Panc1 (cell line): ENCODE measurements at regions of chr2 and their contacts with region 1.

Region 1: GRCh38 chr2:106316915-106317314 is 122.8 kb upstream of the UXS1 start:
- DNase-seq: no peak
- ATAC-seq: no peak
- H3K4me3 ChIP-seq: no peak overlapping the region
- H3K27ac ChIP-seq: no peak overlapping the region
- H3K4me1 ChIP-seq: no peaks in the 10 kb centered on the region
- H3K27me3 ChIP-seq: no peaks in the 10 kb centered on the region
- CTCF ChIP-seq: no peak

Region 2: DNA sequence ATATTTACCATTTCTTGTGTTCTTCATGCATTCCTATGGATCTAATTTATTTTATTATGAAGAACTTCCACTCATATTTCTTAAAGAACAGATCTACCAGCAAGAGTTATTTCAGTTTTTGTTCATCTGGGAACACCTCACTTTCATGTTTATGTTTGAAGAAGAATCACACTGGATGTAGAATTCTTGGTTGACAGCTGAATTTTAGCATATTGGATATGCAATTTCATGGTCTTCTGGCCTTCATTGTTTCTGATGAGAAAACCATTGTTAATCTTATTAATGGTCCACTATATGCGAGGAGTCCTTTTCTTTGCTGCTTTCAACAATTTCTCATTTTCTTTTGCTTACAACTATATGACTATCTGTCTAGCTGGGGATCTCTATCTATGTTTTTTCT is 312.1 kb before region 1 on chr2:
- CTCF ChIA-PET with region 1: no interaction called
- POLR2A ChIA-PET with region 1: interaction called, 11 read pairs
- in situ Hi-C with region 1: no loop called
- intact Hi-C with region 1: no loop called
- DNase-seq: no peak
- ATAC-seq: no peak
- H3K4me3 ChIP-seq: no peak overlapping the region
- H3K27ac ChIP-seq: no peak overlapping the region
- H3K4me1 ChIP-seq: no peaks in the 10 kb centered on the region
- H3K27me3 ChIP-seq: no peaks in the 10 kb centered on the region
- CTCF ChIP-seq: no peak